Tibial artery (tissue), 4 donors: ENCODE measurements at regions of chr7 and their contacts with region 1.

Region 1: GRCh38 chr7:6160191-6160623 is 112.2 kb downstream of the CYTH3 start:
- DNase-seq: peak; percentile 72 to 82
- H3K4me3 ChIP-seq: no peak overlapping the region
- H3K27ac ChIP-seq: peak overlapping the region; percentile 15 to 86
- H3K4me1 ChIP-seq: peaks cover 0 to 31% (median 18%) of the 10 kb centered on the region in 4 donors
- H3K27me3 ChIP-seq: no peaks in the 10 kb centered on the region
- CTCF ChIP-seq: peak; percentile 69 to 76

Region 2: GRCh38 chr7:6117312-6117932 is 42.8 kb before region 1 on chr7:
- intact Hi-C with region 1: no loop called
- DNase-seq: no peak
- H3K4me3 ChIP-seq: no peak overlapping the region
- H3K27ac ChIP-seq: no peak overlapping the region
- H3K4me1 ChIP-seq: no peaks in the 10 kb centered on the region
- H3K27me3 ChIP-seq: no peaks in the 10 kb centered on the region
- CTCF ChIP-seq: no peak

Region 3: GRCh38 chr7:6272481-6273323 is 112.5 kb after region 1 on chr7 and contains the start of gene CYTH3:
- intact Hi-C with region 1: loop called (anchors 5 kb)
- DNase-seq: peak; percentile 66 to 90
- H3K4me3 ChIP-seq: peak within 1 kb of the TSS; percentile 99
- H3K27ac ChIP-seq: peak within 1 kb of the TSS; percentile 87 to 93
- H3K4me1 ChIP-seq: peaks cover 0 to 32% (median 23%) of the 10 kb centered on the region in 4 donors
- H3K27me3 ChIP-seq: no peaks in the 10 kb centered on the region
- CTCF ChIP-seq: peak in 1 of 2 experiments; percentile 9

Region 4: DNA sequence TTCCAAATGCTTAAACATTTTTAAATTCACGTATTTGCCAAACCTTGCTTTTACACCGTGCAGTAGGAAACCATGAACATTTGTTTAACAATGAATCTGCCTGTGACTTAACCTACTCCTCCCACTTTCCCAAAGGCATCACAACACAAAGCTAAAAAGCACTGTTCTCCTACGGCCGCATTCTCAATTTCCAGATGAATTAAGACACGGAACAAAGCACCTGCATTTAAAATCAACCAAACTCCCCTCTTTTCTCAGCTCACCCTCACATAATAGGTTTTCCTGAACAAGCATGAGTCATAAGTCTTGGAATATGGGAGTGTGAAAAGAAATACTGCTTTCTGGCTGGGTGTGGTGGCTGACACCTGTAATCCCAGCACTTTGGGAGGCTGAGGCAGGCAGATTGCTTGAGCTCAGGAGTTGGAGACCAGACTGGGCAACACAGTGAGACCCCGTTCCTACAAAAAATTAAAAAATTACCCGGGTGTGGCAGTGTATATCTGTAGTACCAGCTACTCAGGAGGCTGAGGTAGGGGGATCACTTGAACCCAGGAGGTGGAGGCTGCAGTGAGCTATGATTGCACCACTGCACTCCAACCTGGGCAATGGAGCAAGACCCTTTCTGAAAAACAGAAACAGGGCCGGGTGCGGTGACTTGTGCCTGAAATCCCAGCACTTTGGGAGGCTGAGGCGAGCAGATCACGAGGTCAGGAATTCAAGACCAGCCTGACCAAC is 163.9 kb after region 1 on chr7:
- intact Hi-C with region 1: loop called (anchors 5 kb)
- DNase-seq: no peak
- H3K4me3 ChIP-seq: no peak overlapping the region
- H3K27ac ChIP-seq: no peak overlapping the region
- H3K4me1 ChIP-seq: peaks cover 0 to 3% (median 0%) of the 10 kb centered on the region in 4 donors
- H3K27me3 ChIP-seq: no peaks in the 10 kb centered on the region
- CTCF ChIP-seq: no peak